ENCODE measurements at regions of chr2 and their contacts with region 1.

Region 1: DNA sequence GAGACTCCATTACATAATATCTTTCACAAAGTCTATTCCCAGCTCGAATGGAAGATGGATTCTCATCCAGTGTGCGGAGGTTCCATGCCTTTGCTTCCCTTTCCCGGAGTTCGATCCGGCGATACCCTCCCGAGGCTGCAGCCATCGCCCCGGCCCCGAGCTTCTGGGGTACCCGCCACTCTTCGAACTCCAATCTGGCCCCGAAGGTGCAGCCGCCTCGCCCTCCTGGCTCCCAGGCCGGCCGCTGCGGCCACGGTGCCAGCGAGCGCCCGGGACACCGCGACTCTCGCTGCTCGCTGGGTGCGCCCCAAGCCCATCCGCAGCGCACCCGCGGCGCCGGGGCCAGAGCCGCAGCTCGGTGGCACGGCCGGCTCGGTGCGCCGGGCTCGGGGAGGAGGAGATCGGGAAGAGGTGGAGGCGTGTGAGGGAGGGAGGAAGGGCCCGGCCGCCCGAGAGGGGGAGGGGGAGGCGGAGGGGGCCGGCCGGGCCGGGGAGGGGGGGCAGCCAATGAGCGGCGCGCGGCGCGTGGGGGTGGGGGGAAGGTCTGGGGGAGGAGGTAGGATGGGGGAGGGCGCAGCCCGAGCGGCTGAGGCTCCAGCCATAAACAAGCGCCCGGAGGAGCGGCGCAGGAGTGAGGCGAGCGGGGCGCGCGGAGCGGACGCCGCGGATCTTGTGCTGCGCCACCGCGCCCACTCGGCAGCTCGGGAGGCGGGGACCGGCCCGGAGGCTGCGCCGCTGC is at the start of gene CRIM1:
- DNase-seq: peak; percentile 87
- ATAC-seq: peak; percentile 48
- H3K4me3 ChIP-seq: peak within 1 kb of the TSS; percentile 91
- H3K27ac ChIP-seq: peak within 1 kb of the TSS; percentile 92
- H3K4me1 ChIP-seq: peaks cover 49% of the 10 kb centered on the region
- H3K27me3 ChIP-seq: no peaks in the 10 kb centered on the region
- CTCF ChIP-seq: no peak
- total RNA-seq, gene CRIM1: 70.7 and 85.7 TPM in 2 replicates

Region 2: DNA sequence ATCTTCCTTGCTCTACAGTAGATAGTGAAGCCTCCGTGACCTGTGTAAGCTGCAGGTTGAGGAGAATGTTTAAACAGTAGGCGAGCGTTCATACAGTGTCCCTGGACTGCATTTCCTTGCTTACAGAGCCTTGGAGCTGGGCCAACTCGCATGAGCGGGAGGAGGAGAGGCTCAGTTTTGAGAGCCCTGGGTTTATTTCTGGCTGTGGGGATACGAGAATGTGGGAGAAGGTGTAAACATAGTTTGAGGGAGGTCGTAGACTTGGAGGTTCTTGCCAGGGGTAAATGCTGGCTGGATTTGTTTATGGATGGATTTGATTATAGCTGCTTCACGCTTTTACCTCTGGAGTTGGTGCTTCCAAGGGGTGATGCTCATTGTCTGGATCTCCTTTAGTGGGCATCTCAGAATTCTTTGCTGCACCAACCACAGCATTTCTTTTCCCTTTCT is 21.0 kb after region 1 on chr2:
- CTCF ChIA-PET with region 1: interaction called, 6 read pairs
- POLR2A ChIA-PET with region 1: interaction called, 17 read pairs
- intact Hi-C with region 1: loop called (anchors 2 kb)
- DNase-seq: peak; percentile 71
- ATAC-seq: peak; percentile 20
- H3K4me3 ChIP-seq: no peak overlapping the region
- H3K27ac ChIP-seq: peak overlapping the region; percentile 30
- H3K4me1 ChIP-seq: peaks cover 99% of the 10 kb centered on the region
- H3K27me3 ChIP-seq: no peaks in the 10 kb centered on the region
- CTCF ChIP-seq: no peak

Region 3: GRCh38 chr2:36411962-36412444 is 56.7 kb after region 1 on chr2:
- CTCF ChIA-PET with region 1: no interaction called
- POLR2A ChIA-PET with region 1: interaction called, 11 read pairs
- intact Hi-C with region 1: no loop called
- DNase-seq: no peak
- ATAC-seq: no peak
- H3K4me3 ChIP-seq: no peak overlapping the region
- H3K27ac ChIP-seq: no peak overlapping the region
- H3K4me1 ChIP-seq: peaks cover 11% of the 10 kb centered on the region
- H3K27me3 ChIP-seq: no peaks in the 10 kb centered on the region
- CTCF ChIP-seq: no peak

Region 4: GRCh38 chr2:36461039-36461681 is 105.8 kb after region 1 on chr2:
- CTCF ChIA-PET with region 1: interaction called, 28 read pairs
- POLR2A ChIA-PET with region 1: no interaction called
- intact Hi-C with region 1: loop called (anchors 1 kb)
- DNase-seq: peak; percentile 92
- ATAC-seq: peak; percentile 91
- H3K4me3 ChIP-seq: peak overlapping the region; percentile 22; the same call in 1 of the 2 replicates
- H3K27ac ChIP-seq: peak overlapping the region; percentile 81
- H3K4me1 ChIP-seq: peaks cover 36% of the 10 kb centered on the region
- H3K27me3 ChIP-seq: no peaks in the 10 kb centered on the region
- CTCF ChIP-seq: no peak

Region 5: GRCh38 chr2:36568516-36569246 is 213.4 kb after region 1 on chr2:
- CTCF ChIA-PET with region 1: no interaction called
- POLR2A ChIA-PET with region 1: interaction called, 7 read pairs
- intact Hi-C with region 1: loop called (anchors 5 kb)
- DNase-seq: peak; percentile 94
- ATAC-seq: peak; percentile 70
- H3K4me3 ChIP-seq: peak overlapping the region; percentile 60
- H3K27ac ChIP-seq: peak overlapping the region; percentile 99
- H3K4me1 ChIP-seq: peaks cover 86% of the 10 kb centered on the region
- H3K27me3 ChIP-seq: no peaks in the 10 kb centered on the region
- CTCF ChIP-seq: no peak

Measured in PC-3 (cell line).